Common myeloid progenitor, CD34-positive (primary cell): ENCODE measurements at regions of chr20 and their contacts with region 1.

Region 1: GRCh38 chr20:44080646-44081267 is 106.2 kb downstream of the JPH2 start:
- DNase-seq: peak; percentile 68 to 86 (median 78)
- H3K4me3 ChIP-seq: no peak overlapping the region
- H3K27ac ChIP-seq: no peak overlapping the region
- H3K4me1 ChIP-seq: no peaks in the 10 kb centered on the region
- H3K27me3 ChIP-seq: peaks cover 0 to 3% (median 0%) of the 10 kb centered on the region in 5 experiments

Region 2: DNA sequence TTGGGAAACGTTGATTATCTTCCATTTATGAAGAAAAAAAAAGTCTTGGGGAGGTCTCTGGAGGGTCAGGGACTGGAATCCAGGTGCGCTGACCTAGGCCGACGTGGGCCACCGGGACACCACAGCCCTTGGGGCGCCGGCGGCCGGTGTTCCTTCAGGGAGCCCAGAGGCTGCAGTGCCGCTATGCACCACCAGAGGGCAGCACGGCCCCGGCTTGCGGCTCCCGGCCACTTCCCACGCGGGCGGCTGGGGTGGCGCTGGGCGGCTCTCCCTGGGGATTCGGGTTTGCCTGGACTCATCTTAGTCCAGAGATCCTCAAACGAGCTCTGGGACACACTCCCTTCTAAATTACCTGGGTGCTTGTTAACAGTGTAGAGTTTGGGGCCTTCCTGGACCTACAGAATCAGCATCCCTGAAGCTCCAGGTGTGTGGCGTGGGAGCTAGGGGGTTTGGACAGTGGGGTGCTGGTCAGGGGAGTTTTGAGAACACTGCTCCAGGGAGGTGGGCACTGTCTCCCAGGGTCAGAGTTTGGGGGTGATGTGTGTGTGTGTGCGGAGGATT is 330.9 kb before region 1 on chr20:
- CTCF ChIA-PET with region 1: interaction called, 78 read pairs
- POLR2A ChIA-PET with region 1: no interaction called
- DNase-seq: peak; percentile 25 to 45 (median 37)
- H3K4me3 ChIP-seq: no peak overlapping the region
- H3K27ac ChIP-seq: no peak overlapping the region
- H3K4me1 ChIP-seq: peaks cover 0 to 29% (median 13%) of the 10 kb centered on the region in 4 experiments
- H3K27me3 ChIP-seq: peaks cover 0 to 39% (median 4%) of the 10 kb centered on the region in 5 experiments

Region 3: GRCh38 chr20:43893930-43894329 is 186.8 kb before region 1 on chr20:
- CTCF ChIA-PET with region 1: no interaction called
- POLR2A ChIA-PET with region 1: no interaction called
- DNase-seq: no peak
- H3K4me3 ChIP-seq: no peak overlapping the region
- H3K27ac ChIP-seq: no peak overlapping the region
- H3K4me1 ChIP-seq: no peaks in the 10 kb centered on the region
- H3K27me3 ChIP-seq: peaks cover 0 to 28% (median 2%) of the 10 kb centered on the region in 5 experiments

Region 4: DNA sequence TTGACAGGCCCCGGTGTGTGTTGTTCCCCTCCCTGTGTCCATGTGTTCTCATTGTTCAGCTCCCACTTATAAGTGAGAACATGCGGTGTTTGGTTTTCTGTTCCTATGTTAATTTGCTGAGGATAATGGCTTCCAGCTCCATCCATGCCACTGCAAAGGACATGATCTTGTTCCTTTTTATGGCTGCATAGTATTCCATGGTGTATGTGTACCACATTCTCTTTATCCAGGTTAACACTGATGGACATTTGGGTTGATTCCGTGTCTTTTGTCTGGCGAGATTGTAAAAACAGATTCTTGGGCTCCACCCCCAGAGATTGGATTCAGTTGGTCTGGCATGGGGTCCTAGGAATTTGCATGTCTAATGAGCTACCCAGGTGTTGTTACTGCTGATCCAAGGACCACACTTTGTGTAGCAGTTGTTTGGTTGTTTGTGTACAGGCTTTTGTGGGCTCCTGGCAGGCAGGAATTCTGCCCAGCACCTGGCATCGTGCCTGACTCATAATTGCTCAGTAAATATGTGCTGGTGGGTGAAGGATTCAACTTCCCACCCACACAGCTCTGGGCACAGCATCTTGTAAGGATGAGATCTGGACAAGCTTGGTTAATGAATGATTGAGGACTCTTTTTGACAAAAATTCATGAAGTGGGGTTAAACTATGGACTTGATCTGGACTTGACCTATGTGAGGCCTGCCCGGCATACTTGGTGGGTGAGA is 160.9 kb before region 1 on chr20:
- CTCF ChIA-PET with region 1: interaction called, 10 read pairs
- POLR2A ChIA-PET with region 1: no interaction called
- DNase-seq: no peak
- H3K4me3 ChIP-seq: no peak overlapping the region
- H3K27ac ChIP-seq: no peak overlapping the region
- H3K4me1 ChIP-seq: peaks cover 0 to 14% (median 4%) of the 10 kb centered on the region in 4 experiments
- H3K27me3 ChIP-seq: peaks cover 0 to 89% (median 30%) of the 10 kb centered on the region in 5 experiments

Region 5: DNA sequence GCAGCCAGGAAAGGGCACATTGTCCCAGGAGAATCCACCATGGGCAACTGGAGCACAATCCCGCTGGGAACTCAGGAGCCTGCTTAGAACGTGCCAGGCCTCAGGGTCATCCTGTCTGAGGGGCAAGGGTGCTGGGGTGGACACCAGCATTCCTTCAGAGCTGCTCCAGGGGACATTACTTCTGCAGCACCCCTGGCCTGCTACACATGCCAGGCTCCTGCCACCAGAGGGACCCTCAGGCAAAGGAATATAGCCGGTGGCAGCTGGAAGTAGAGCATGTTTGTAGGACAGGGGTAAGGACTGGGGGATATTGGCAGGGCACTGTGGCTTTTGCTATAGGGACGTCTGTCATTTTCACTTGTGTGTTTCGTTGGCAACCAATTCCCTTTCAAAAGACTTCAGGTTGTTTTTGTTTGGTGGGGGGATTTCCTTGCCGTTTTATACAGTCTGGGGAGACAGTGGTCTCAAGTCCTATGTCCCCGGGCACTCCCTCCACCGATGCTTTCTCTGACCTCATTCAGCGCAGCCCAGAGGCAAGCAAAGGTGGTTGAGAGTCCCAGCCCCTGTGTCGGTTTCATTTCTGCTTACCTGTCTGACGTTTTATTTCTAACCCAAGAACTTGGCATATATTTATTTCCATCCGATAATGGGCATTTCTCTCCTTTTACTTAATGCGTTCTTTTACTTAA is 24.6 kb before region 1 on chr20:
- CTCF ChIA-PET with region 1: interaction called, 83 read pairs
- POLR2A ChIA-PET with region 1: no interaction called
- DNase-seq: peak; percentile 53 to 73 (median 68)
- H3K4me3 ChIP-seq: no peak overlapping the region
- H3K27ac ChIP-seq: no peak overlapping the region
- H3K4me1 ChIP-seq: no peaks in the 10 kb centered on the region
- H3K27me3 ChIP-seq: peaks cover 0 to 11% (median 2%) of the 10 kb centered on the region in 5 experiments